ENCODE measurements at regions of chr10 and their contacts with region 1.

Region 1: DNA sequence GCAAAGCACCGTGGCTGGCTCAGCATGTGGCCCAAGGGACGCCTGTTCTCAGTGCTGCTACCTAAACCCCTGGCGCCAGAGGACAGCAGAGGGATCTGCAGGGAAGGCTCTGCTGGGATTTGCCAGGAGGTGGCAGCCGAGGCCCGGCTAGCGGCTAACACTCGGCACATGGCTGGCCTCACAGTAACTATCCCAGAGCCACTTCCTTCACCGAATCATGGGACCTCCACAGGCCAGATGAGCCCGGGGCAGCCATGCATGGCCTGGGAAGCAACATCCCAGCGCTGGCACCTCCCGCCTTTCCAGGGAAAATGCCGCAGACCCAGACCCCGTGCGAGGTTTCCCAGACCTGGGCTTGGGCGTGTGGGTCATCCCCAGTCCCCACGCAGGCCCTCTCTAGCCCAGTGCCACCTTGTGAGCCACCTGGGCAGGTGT is 36.4 kb downstream of the DPYSL4 start:
- DNase-seq: peak; percentile 55
- H3K4me3 ChIP-seq: no peak overlapping the region
- H3K27ac ChIP-seq: no peak overlapping the region
- H3K4me1 ChIP-seq: no peaks in the 10 kb centered on the region
- H3K27me3 ChIP-seq: no peaks in the 10 kb centered on the region
- CTCF ChIP-seq: peak; percentile 97 to 99

Region 2: GRCh38 chr10:132193907-132194552 is 29.1 kb before region 1 on chr10:
- CTCF ChIA-PET with region 1: no interaction called
- dilution Hi-C with region 1: no loop called
- in situ Hi-C with region 1: no loop called
- intact Hi-C with region 1: no loop called
- DNase-seq: no peak
- H3K4me3 ChIP-seq: no peak overlapping the region
- H3K27ac ChIP-seq: no peak overlapping the region
- H3K4me1 ChIP-seq: no peaks in the 10 kb centered on the region
- H3K27me3 ChIP-seq: no peaks in the 10 kb centered on the region
- CTCF ChIP-seq: no peak

Region 3: GRCh38 chr10:132371641-132372081 is 148.5 kb after region 1 on chr10:
- CTCF ChIA-PET with region 1: no interaction called
- dilution Hi-C with region 1: no loop called
- in situ Hi-C with region 1: no loop called
- intact Hi-C with region 1: loop called (anchors 5 kb)
- DNase-seq: no peak
- H3K4me3 ChIP-seq: no peak overlapping the region
- H3K27ac ChIP-seq: no peak overlapping the region
- H3K4me1 ChIP-seq: no peaks in the 10 kb centered on the region
- H3K27me3 ChIP-seq: no peaks in the 10 kb centered on the region
- CTCF ChIP-seq: peak; percentile 13 to 34

Region 4: GRCh38 chr10:132452631-132453469 is 229.7 kb after region 1 on chr10:
- CTCF ChIA-PET with region 1: no interaction called
- dilution Hi-C with region 1: no loop called
- in situ Hi-C with region 1: loop called (anchors 5 to 10 kb)
- intact Hi-C with region 1: loop called (anchors 1 kb)
- DNase-seq: peak; percentile 79
- H3K4me3 ChIP-seq: peak overlapping the region in 1 of 3 experiments; percentile 16
- H3K27ac ChIP-seq: no peak overlapping the region
- H3K4me1 ChIP-seq: peaks cover 17% of the 10 kb centered on the region
- H3K27me3 ChIP-seq: no peaks in the 10 kb centered on the region
- CTCF ChIP-seq: peak; percentile 69 to 88

Region 5: GRCh38 chr10:132637477-132638129 is 414.4 kb after region 1 on chr10:
- CTCF ChIA-PET with region 1: no interaction called
- dilution Hi-C with region 1: no loop called
- in situ Hi-C with region 1: loop called (anchors 10 to 25 kb)
- intact Hi-C with region 1: loop called (anchors 2 kb)
- DNase-seq: peak; percentile 26
- H3K4me3 ChIP-seq: no peak overlapping the region
- H3K27ac ChIP-seq: no peak overlapping the region
- H3K4me1 ChIP-seq: no peaks in the 10 kb centered on the region
- H3K27me3 ChIP-seq: no peaks in the 10 kb centered on the region
- CTCF ChIP-seq: peak; percentile 70 to 87

Measured in mammary epithelial cell (primary cell).